Stomach (tissue), 19 donors: ENCODE measurements at regions of chr19 and their contacts with region 1.

Region 1: GRCh38 chr19:56348289-56348877 is 33.7 kb upstream of the ZSCAN5A start:
- DNase-seq: no peak
- H3K4me3 ChIP-seq: no peak overlapping the region
- H3K27ac ChIP-seq: no peak overlapping the region
- H3K4me1 ChIP-seq: no peaks in the 10 kb centered on the region
- H3K27me3 ChIP-seq: no peaks in the 10 kb centered on the region
- CTCF ChIP-seq: no peak
- EP300 ChIP-seq: no peak
- POLR2A ChIP-seq: no peak

Region 2: GRCh38 chr19:56066152-56067023 is 282.0 kb before region 1 on chr19:
- intact Hi-C with region 1: loop called (anchors 10 kb)
- DNase-seq: peak; percentile 74 to 86
- H3K4me3 ChIP-seq: peak overlapping the region; percentile 18 to 26 (median 20)
- H3K27ac ChIP-seq: no peak overlapping the region
- H3K4me1 ChIP-seq: peaks cover 8 to 10% (median 9%) of the 10 kb centered on the region in 4 donors
- H3K27me3 ChIP-seq: peaks cover 0 to 40% (median 16%) of the 10 kb centered on the region in 3 donors
- CTCF ChIP-seq: peak in 5 of 7 experiments; percentile 56 to 87 (median 77)
- EP300 ChIP-seq: no peak
- POLR2A ChIP-seq: no peak

Region 3: DNA sequence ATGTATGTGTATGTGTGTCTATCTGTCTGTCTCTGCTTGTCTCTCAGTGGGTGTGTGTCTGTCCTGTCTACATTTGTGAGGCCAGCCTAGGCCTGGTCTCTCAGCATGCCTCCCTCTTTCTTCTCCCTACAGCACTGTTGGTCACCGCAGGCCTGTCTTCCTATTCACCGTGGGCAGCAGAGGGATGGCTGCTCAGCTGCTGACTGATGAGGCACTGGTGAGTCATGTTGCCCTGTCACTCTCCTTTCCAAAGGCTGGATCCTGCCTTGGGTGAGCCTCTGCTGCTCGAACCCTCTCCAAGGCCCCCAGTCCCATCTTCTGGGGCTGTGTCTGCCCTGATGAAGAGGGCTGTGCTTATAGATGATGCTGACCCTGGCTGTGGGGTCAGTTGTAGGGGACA is 253.0 kb after region 1 on chr19:
- intact Hi-C with region 1: no loop called
- DNase-seq: no peak
- H3K4me3 ChIP-seq: no peak overlapping the region
- H3K27ac ChIP-seq: no peak overlapping the region
- H3K4me1 ChIP-seq: peaks cover 0 to 7% (median 3%) of the 10 kb centered on the region in 4 donors
- H3K27me3 ChIP-seq: no peaks in the 10 kb centered on the region
- CTCF ChIP-seq: no peak
- EP300 ChIP-seq: no peak
- POLR2A ChIP-seq: no peak